Naive thymus-derived CD4-positive, alpha-beta T cell (primary cell): ENCODE measurements at regions of chr11 and their contacts with region 1.

Region 1: GRCh38 chr11:33700425-33701271 is at the start of gene C11orf91:
- DNase-seq: peak; percentile 88 to 98 (median 95)
- ATAC-seq: peak; percentile 99
- H3K4me3 ChIP-seq: peak within 1 kb of the TSS; percentile 54
- H3K4me3 Mint-ChIP-seq: peak within 1 kb of the TSS; percentile 84 to 96 (median 92)
- H3K27ac ChIP-seq: no peak within 1 kb of the TSS
- H3K27ac Mint-ChIP-seq: peak within 1 kb of the TSS; percentile 61 to 84 (median 76)
- H3K4me1 ChIP-seq: peaks cover 9 to 13% of the 10 kb centered on the region in 2 donors
- H3K4me1 Mint-ChIP-seq: peaks cover 14 to 27% (median 23%) of the 10 kb centered on the region in 7 donors
- H3K27me3 ChIP-seq: no peaks in the 10 kb centered on the region
- H3K27me3 Mint-ChIP-seq: peaks cover 0 to 31% (median 5%) of the 10 kb centered on the region in 5 donors
- total RNA-seq, gene C11orf91: not detected

Region 2: DNA sequence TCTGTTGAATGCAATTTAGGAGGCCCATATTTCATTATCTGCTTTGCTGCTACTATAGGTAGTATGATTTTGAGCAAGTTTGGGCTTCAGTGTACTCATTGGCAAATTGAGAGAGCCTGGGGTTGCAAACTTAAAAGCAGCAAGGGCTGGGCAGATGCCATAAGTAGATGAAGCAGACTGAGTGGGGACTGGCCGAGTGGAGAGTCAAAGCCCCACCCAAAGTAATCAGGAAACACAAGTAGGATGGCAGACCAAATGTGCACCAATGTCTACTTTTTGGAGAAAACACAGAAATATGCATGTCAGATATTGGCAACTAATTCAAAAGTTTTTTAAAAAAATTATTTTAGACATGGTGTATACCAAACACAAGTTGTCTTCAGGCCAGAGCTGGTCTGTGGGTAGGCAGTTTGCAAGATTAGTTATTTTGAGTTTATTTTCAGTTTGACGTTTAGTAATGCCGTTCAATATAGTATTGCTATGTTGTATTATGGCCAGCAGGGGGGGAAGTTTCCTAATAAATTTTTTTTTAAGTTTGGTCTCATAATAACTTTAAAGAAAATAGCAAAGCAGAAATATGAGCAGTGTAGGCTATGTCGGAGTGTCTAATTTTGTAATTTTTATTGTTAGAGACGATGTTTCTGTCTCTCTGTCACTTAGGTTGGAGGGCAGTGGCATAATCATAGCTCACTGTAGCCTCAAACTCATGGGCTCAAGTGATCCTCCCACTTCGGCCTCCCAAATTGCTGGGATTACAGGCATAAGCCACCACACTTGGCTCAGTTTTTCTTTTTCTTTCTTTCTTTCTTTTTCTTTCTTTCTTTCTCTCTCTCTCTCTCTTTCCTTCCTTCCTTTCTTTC is 338.4 kb before region 1 on chr11:
- CTCF ChIA-PET with region 1: no interaction called
- POLR2A ChIA-PET with region 1: no interaction called
- intact Hi-C with region 1: loop called in 1 of 2 experiments (anchors 1 kb)
- DNase-seq: peak in 7 of 9 donors; percentile 20 to 45 (median 35)
- ATAC-seq: peak; percentile 69
- H3K4me3 ChIP-seq: no peak overlapping the region
- H3K4me3 Mint-ChIP-seq: peak overlapping the region in 1 of 10 donors; percentile 53
- H3K27ac ChIP-seq: no peak overlapping the region
- H3K27ac Mint-ChIP-seq: no peak overlapping the region
- H3K4me1 ChIP-seq: no peaks in the 10 kb centered on the region
- H3K4me1 Mint-ChIP-seq: peaks cover 0 to 6% (median 2%) of the 10 kb centered on the region in 7 donors
- H3K27me3 ChIP-seq: no peaks in the 10 kb centered on the region
- H3K27me3 Mint-ChIP-seq: peaks cover 5 to 29% (median 14%) of the 10 kb centered on the region in 5 donors

Region 3: GRCh38 chr11:33773987-33774735 is 73.5 kb after region 1 on chr11 and contains the start of gene FBXO3:
- CTCF ChIA-PET with region 1: no interaction called
- POLR2A ChIA-PET with region 1: no interaction called
- intact Hi-C with region 1: loop called (anchors 1 kb)
- DNase-seq: peak; percentile 71 to 91 (median 88)
- ATAC-seq: peak; percentile 98
- H3K4me3 ChIP-seq: peak within 1 kb of the TSS; percentile 91
- H3K4me3 Mint-ChIP-seq: peak within 1 kb of the TSS; percentile 93 to 99 (median 97)
- H3K27ac ChIP-seq: peak within 1 kb of the TSS; percentile 83
- H3K27ac Mint-ChIP-seq: peak within 1 kb of the TSS; percentile 93 to 98 (median 96)
- H3K4me1 ChIP-seq: peaks cover 20 to 23% of the 10 kb centered on the region in 2 donors
- H3K4me1 Mint-ChIP-seq: peaks cover 33 to 58% (median 45%) of the 10 kb centered on the region in 7 donors
- H3K27me3 ChIP-seq: no peaks in the 10 kb centered on the region
- H3K27me3 Mint-ChIP-seq: peaks cover 0 to 34% (median 7%) of the 10 kb centered on the region in 5 donors
- total RNA-seq, gene FBXO3: 22.6 to 55.7 (median 47.7) TPM

Region 4: DNA sequence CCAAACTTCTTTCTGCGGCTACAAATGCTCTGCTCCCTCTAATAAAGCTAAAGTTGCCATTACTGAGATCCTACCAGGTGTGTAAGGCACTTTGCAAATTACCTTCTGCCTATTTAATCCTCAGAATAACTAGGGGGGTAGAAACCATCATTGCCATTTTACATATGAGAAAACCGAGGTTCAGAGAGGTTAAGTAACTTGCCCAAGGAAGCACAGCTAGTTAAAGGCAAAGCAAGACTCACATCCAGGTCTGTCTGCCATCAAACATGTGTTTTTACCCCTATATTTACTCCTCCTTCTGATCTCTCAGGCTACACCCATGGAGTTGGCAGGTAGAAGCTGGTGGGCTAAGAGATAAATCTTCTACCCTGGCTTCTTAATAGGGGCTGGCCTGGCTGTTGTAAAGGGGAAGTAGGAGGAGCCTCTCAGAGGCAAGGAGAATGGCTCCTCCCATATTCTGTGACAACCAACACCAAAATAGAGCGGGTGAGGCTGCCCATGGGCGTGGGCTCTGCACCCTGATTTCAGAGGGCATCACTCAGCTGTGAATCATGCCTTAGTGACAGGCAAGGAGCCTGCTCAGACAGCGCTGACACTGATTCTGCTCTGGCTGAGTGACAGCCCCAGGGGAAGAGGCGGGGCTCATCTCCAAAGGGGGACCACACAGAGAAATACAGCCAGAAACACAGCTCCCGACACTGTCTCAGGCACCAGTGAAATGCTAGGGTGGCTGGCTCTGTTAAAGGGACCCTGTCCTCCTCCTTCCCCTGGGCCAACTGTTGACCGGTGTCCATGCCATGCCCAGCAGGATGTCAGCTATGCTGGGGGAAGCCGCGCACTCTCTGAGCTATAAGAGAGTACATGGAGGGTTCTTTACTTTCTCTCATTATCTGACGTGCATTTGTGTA is 550.3 kb after region 1 on chr11:
- CTCF ChIA-PET with region 1: no interaction called
- POLR2A ChIA-PET with region 1: no interaction called
- intact Hi-C with region 1: loop called (anchors 2 to 10 kb)
- DNase-seq: peak; percentile 24 to 79 (median 58)
- ATAC-seq: peak; percentile 94
- H3K4me3 ChIP-seq: peak overlapping the region; percentile 40
- H3K4me3 Mint-ChIP-seq: peak overlapping the region; percentile 35 to 85 (median 78)
- H3K27ac ChIP-seq: no peak overlapping the region
- H3K27ac Mint-ChIP-seq: peak overlapping the region; percentile 12 to 79 (median 55)
- H3K4me1 ChIP-seq: peaks cover 36 to 51% of the 10 kb centered on the region in 2 donors
- H3K4me1 Mint-ChIP-seq: peaks cover 36 to 67% (median 58%) of the 10 kb centered on the region in 7 donors
- H3K27me3 ChIP-seq: no peaks in the 10 kb centered on the region
- H3K27me3 Mint-ChIP-seq: peaks cover 0 to 20% (median 0%) of the 10 kb centered on the region in 5 donors

Region 5: GRCh38 chr11:35662649-35663407 is 1962.2 kb after region 1 on chr11 and contains the start of gene TRIM44:
- CTCF ChIA-PET with region 1: no interaction called
- POLR2A ChIA-PET with region 1: no interaction called
- intact Hi-C with region 1: loop called in 1 of 2 experiments (anchors 2 kb)
- DNase-seq: peak; percentile 69 to 85 (median 82)
- ATAC-seq: peak; percentile 89
- H3K4me3 ChIP-seq: peak within 1 kb of the TSS; percentile 94
- H3K4me3 Mint-ChIP-seq: peak within 1 kb of the TSS; percentile 91 to 99 (median 95)
- H3K27ac ChIP-seq: peak within 1 kb of the TSS; percentile 94
- H3K27ac Mint-ChIP-seq: peak within 1 kb of the TSS; percentile 90 to 100 (median 96)
- H3K4me1 ChIP-seq: peaks cover 21 to 22% of the 10 kb centered on the region in 2 donors
- H3K4me1 Mint-ChIP-seq: peaks cover 24 to 61% (median 55%) of the 10 kb centered on the region in 7 donors
- H3K27me3 ChIP-seq: no peaks in the 10 kb centered on the region
- H3K27me3 Mint-ChIP-seq: peaks cover 0 to 22% (median 5%) of the 10 kb centered on the region in 5 donors
- total RNA-seq, gene TRIM44: 35.7 to 60.8 (median 58.6) TPM